ENCODE measurements at regions of chr9 and their contacts with region 1.

Region 1: GRCh38 chr9:99916650-99917049 is 10.2 kb downstream of the STX17 start:
- DNase-seq: no peak
- H3K4me3 ChIP-seq: no peak overlapping the region
- H3K27me3 ChIP-seq: no peaks in the 10 kb centered on the region
- CTCF ChIP-seq: no peak

Region 2: GRCh38 chr9:99840072-99840471 is 76.6 kb before region 1 on chr9:
- CTCF ChIA-PET with region 1: no interaction called
- POLR2A ChIA-PET with region 1: no interaction called
- DNase-seq: no peak
- H3K4me3 ChIP-seq: no peak overlapping the region
- H3K27me3 ChIP-seq: no peaks in the 10 kb centered on the region
- CTCF ChIP-seq: no peak

Region 3: DNA sequence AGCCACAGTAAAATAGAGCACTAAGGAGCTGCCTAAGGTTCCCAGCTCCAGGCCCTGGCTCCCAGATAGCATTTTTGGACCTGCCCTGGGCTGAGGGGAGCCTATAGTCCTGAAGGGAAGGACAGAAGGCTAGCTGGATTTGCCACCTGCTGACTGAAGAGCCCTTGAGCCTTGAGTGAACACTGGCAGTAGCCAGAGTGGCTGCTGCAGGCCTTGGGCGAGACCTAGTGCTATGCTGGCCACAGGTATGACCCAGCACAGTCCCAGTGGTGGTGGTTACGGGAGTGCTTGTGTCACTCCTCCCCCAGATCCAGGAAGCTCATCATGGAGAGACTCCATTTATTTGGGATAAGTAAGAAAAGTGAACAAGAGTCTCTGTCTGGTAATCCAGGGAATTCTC is 20.5 kb before region 1 on chr9:
- CTCF ChIA-PET with region 1: no interaction called
- POLR2A ChIA-PET with region 1: no interaction called
- DNase-seq: no peak
- H3K4me3 ChIP-seq: no peak overlapping the region
- H3K27me3 ChIP-seq: peaks cover 10% of the 10 kb centered on the region
- CTCF ChIP-seq: no peak

Region 4: GRCh38 chr9:99906403-99907207 is 10.0 kb before region 1 on chr9 and contains the start of gene STX17:
- CTCF ChIA-PET with region 1: interaction called, 11 read pairs
- POLR2A ChIA-PET with region 1: no interaction called
- DNase-seq: peak; percentile 11
- H3K4me3 ChIP-seq: peak within 1 kb of the TSS; percentile 88
- H3K27me3 ChIP-seq: no peaks in the 10 kb centered on the region
- CTCF ChIP-seq: 0 out of 2 replicates have a peak, but pooled peaks have one; percentile 2
- polyA plus RNA-seq, gene STX17: 6.9 and 13.2 TPM in 2 replicates

Region 5: GRCh38 chr9:99986642-99987041 is 70.0 kb after region 1 on chr9:
- CTCF ChIA-PET with region 1: no interaction called
- POLR2A ChIA-PET with region 1: no interaction called
- DNase-seq: no peak
- H3K4me3 ChIP-seq: no peak overlapping the region
- H3K27me3 ChIP-seq: no peaks in the 10 kb centered on the region
- CTCF ChIP-seq: no peak